ENCODE measurements at regions of chr1 and their contacts with region 1.

Region 1: DNA sequence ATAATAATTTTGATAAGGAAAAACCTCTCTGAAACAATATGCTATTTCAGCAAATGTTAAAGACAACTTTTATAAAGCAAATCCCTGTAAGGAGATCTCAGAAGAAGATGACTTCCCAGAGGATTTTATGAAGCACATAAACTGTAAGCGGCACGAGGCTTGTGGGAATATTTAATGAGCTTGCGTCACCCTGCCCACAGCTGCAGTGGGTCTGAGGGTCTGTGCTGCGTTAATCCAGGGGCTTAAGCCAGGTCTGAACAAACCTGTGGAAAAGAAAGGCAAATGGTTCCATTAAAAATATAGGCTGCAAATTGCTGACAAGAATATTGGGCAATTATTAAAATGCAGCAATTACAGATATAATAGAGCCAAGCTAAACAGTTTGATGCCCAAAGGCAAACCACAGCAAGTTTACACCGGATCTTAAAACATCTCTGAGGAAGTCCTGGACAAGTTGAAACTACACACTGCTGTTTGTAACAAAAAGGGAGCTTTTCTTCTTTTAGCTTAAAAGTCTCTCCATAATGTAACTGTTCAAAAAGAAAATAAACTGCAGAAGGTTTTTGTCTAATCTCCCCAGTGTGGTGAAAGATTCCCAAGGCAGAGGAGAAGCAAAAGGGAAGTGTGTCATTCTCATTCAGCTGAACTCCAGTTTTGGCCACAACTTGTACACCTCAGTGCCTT is 21.8 kb downstream of the TGFBR3 start:
- DNase-seq: no peak
- CTCF ChIP-seq: no peak

Region 2: DNA sequence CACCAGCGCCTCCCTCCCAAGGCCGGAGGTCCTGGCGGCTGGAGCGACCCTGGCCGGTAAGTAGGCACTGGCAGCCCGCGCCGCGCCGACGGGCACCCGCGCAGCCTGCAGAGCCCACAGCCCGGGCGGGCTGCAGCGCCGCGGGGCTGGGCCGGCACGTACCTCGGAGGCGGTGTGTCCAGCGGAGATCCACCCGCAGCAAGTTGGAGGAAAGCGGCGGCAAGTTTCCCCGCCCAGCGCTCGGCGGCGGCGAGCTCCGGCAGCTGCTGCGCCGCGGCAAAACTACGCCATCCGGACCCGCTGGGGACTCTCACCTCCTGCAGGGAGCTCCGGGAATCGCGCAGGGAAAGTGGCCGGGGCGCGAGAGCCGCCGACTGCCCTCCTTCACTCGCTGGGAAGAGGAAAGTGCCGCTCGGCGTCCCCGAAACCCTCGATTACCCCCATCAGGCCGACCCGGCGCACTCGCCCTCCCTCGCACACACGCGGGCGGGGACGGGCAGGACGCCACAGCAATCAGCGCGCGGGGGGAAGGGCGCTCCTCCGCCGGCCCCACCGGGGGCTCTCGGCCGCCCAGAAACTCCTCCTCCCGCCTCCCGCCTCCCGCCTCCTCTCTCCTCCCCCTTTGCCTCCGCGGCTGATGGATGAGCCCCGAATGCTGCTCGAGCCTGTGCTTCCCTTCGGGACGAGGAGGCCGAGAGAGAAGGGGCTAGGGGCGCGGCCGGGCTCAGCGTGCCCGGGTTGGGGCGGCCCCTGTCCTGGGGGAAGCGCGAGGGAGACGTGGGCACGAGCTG is 21.8 kb after region 1 on chr1 and contains the start of gene TGFBR3:
- CTCF ChIA-PET with region 1: interaction called, 70 read pairs
- POLR2A ChIA-PET with region 1: no interaction called
- DNase-seq: peak; percentile 84
- CTCF ChIP-seq: peak; percentile 47

Region 3: GRCh38 chr1:91968334-91968733 is 104.2 kb after region 1 on chr1:
- CTCF ChIA-PET with region 1: no interaction called
- POLR2A ChIA-PET with region 1: no interaction called
- DNase-seq: no peak
- CTCF ChIP-seq: no peak

Region 4: DNA sequence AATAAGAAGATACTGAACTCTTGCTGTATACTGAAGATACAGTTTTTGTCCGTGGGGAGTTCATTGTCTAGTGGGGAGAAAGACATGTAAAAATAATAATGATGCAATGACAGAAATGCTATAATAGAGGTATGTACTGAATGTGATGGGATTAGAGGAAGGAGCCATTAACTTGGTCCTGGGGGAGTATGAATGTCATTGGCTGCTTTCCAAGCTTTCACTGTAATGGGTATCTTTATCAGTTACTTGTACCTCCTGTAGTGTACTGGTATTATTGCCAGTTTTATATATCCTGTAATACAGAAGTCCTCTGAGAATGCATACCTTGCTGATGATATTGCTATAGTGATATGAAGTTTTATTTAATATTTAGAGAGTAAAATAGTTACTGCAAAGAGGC is 223.4 kb after region 1 on chr1:
- CTCF ChIA-PET with region 1: no interaction called
- POLR2A ChIA-PET with region 1: no interaction called
- DNase-seq: no peak
- CTCF ChIP-seq: no peak

Region 5: DNA sequence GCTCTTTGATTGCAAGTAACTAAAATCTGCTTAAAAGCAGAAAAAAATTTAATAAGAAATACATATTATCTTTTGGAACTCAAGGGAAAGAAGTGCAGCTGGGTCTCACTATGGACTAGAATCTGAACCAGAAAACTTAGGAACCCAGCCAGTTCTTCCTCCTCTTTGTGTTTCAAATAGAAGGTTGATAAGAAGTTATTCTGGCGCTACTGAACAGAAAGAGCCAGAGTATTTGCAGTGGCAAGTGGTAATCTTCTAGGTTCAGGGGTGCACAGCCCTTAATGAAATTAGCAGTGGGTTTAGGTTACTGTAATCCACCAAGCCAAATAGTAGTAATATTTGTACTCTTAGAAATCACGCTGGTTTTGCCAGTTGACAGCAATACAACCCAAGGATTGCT is 244.5 kb after region 1 on chr1:
- CTCF ChIA-PET with region 1: no interaction called
- POLR2A ChIA-PET with region 1: no interaction called
- DNase-seq: no peak
- CTCF ChIP-seq: no peak